Dendritic cell treated with granulocyte-macrophage colony-stimulating factor and Interleukin-4, amounts not matched to agents 40 ng/mL and 50 ng/mL, for 4 days (primary cell): ENCODE measurements at regions of chr7 and their contacts with region 1.

Region 1: GRCh38 chr7:2886900-2887299 is 42.8 kb upstream of the GNA12 start:
- H3K4me3 Mint-ChIP-seq: no peak overlapping the region
- H3K27ac Mint-ChIP-seq: no peak overlapping the region
- H3K4me1 Mint-ChIP-seq: peaks cover 6% of the 10 kb centered on the region
- H3K27me3 Mint-ChIP-seq: peaks cover 33% of the 10 kb centered on the region

Region 2: GRCh38 chr7:3065724-3066143 is 178.8 kb after region 1 on chr7:
- intact Hi-C with region 1: loop called (anchors 10 kb)
- H3K4me3 Mint-ChIP-seq: no peak overlapping the region
- H3K27ac Mint-ChIP-seq: no peak overlapping the region
- H3K4me1 Mint-ChIP-seq: peaks cover 18% of the 10 kb centered on the region
- H3K27me3 Mint-ChIP-seq: peaks cover 18% of the 10 kb centered on the region